AG04449 (cell line): ENCODE measurements at regions of chr12 and their contacts with region 1.

Region 1: DNA sequence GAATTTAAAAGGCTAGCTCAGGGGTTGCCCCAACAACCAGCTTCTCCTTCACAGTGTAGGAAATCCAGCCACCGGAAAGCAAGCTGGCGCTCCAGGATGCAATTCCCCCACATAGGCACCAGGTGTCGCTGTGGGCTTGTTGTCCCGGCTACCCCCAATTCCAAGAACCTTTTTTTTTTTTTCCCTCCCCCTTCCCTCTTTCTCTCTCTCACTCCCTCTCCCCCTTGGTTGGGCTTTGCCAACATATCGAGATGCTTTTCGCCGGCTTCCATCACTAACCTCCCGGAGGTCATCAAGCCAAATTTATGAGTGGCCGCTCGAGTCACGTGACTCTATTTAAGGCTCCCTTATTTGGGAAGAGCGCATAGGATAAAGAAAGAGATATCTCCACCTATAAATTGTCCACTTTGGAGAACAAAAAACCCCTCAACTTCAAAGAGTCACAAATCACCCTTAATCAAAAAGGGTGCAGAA is at the start of gene HOXC5:
- DNase-seq: no peak
- H3K4me3 ChIP-seq: peak within 1 kb of the TSS; percentile 49
- CTCF ChIP-seq: peak; percentile 86

Region 2: DNA sequence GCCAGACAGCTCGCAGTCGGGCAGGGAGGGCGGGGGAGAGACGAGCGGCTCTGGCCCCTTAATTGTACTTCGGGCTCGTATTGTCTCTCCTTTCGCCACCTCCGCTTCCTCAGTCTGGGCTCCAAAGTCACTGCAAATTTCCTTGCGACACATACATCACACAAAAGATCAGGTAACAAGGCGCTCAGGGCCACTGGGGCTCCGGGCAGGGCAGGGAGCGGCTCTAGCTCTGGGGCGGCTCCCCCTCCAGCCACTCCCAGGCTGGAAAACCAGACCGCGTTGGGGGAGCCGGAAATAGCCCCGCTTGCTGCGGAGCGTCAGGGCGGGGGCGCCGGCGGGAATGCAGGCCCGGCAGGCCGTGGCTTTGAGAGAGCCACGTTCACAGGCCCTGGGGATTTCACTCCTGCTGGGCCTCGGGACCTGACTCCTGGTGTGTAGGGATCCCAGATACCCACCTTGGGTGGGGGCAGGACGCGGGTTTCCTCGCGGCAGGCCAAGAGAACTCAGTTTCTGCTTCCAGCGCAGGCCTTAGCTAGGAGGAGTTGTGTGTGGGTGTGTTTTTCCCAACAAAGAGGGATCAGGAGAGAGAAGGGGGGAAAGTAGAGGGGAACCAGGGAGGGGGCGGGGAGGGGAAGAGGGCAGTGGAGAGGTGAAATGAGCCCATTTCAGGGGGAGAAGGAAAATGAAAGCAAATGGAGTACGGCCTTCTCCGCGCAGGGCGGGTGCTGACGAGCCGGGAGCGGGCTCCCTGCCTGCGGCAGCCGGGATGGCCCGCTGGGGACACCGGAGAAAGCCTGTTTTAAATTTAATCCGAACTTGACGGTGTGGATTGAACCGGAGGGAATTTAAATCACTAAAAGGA is 37.1 kb before region 1 on chr12:
- CTCF ChIA-PET with region 1: interaction called, 385 read pairs
- POLR2A ChIA-PET with region 1: interaction called, 8 read pairs
- DNase-seq: no peak
- H3K4me3 ChIP-seq: peak overlapping the region; percentile 96
- CTCF ChIP-seq: no peak

Region 3: GRCh38 chr12:54012631-54013409 is 19.8 kb before region 1 on chr12:
- CTCF ChIA-PET with region 1: interaction called, 385 read pairs
- POLR2A ChIA-PET with region 1: interaction called, 34 read pairs
- DNase-seq: no peak
- H3K4me3 ChIP-seq: peak overlapping the region; percentile 46
- CTCF ChIP-seq: peak; percentile 25

Region 4: GRCh38 chr12:54053751-54054741 is 21.4 kb after region 1 on chr12 and contains the start of gene HOXC4:
- CTCF ChIA-PET with region 1: interaction called, 14 read pairs
- POLR2A ChIA-PET with region 1: interaction called, 4 read pairs
- DNase-seq: no peak
- H3K4me3 ChIP-seq: peak within 1 kb of the TSS; percentile 43
- CTCF ChIP-seq: no peak

Region 5: GRCh38 chr12:54131641-54132280 is 99.1 kb after region 1 on chr12:
- CTCF ChIA-PET with region 1: interaction called, 12 read pairs
- POLR2A ChIA-PET with region 1: no interaction called
- DNase-seq: no peak
- H3K4me3 ChIP-seq: no peak overlapping the region
- CTCF ChIP-seq: no peak